ENCODE measurements at regions of chr12 and their contacts with region 1.

Region 1: GRCh38 chr12:49088190-49088931 is 6.2 kb downstream of the DHH start:
- DNase-seq: peak; percentile 88
- H3K4me3 ChIP-seq: 0 out of 2 replicates have a peak overlapping the region, but pooled peaks have one; percentile 29
- H3K27ac ChIP-seq: no peak overlapping the region
- H3K27me3 ChIP-seq: peaks cover 15% of the 10 kb centered on the region
- CTCF ChIP-seq: peak; percentile 89

Region 2: DNA sequence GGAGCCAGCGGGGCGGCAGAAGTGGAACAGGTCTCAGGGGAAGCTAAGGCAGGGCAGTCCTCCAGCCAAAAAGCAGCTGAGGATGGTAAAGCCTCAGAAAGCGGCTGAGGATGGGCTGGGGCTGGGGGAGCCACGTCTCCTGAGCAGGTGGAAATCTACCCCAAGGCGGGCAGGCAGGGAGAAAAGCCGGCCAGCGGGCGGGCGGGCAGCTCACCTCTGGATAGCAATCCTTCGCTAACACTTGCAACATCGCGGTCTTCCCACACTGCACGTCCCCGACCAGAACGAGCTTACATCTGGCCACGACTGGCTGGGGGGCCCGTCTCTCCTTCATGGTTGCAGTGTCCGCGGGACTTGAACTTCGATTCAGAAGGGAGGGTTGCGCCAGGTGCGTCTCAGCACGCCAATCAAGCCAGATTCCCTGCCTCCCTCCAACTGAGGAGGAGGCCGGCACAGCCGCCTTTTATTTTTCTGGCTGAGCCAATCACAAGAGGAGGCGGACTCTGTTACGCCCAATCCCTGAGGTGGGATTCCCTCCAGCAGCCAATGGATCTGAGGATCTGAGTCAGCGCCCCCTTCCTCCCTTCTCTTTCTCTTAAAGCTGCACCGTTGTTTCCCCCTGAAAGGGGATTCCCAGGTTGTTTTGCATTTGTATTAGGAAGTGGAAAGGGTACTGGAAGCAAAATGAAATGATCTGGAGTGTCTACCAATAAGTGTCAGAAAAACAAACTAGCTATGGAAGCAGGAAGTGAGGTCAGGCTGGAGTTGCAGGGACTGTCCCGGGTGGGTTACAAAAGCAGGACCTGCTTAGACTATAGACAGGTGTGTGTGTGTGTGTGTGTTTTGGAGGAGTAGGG is 222.7 kb before region 1 on chr12 and contains the start of gene RND1:
- CTCF ChIA-PET with region 1: no interaction called
- POLR2A ChIA-PET with region 1: no interaction called
- DNase-seq: peak; percentile 70
- H3K4me3 ChIP-seq: peak within 1 kb of the TSS; percentile 66
- H3K27ac ChIP-seq: no peak within 1 kb of the TSS
- H3K27me3 ChIP-seq: peaks cover 36% of the 10 kb centered on the region
- CTCF ChIP-seq: peak; percentile 32
- polyA plus RNA-seq, gene RND1: 0.36 and 0.42 TPM in 2 replicates

Region 3: GRCh38 chr12:48977315-48978281 is 110.8 kb before region 1 on chr12:
- CTCF ChIA-PET with region 1: no interaction called
- POLR2A ChIA-PET with region 1: no interaction called
- DNase-seq: no peak
- H3K4me3 ChIP-seq: no peak overlapping the region
- H3K27ac ChIP-seq: no peak overlapping the region
- H3K27me3 ChIP-seq: peaks cover 64% of the 10 kb centered on the region
- CTCF ChIP-seq: peak; percentile 63

Region 4: DNA sequence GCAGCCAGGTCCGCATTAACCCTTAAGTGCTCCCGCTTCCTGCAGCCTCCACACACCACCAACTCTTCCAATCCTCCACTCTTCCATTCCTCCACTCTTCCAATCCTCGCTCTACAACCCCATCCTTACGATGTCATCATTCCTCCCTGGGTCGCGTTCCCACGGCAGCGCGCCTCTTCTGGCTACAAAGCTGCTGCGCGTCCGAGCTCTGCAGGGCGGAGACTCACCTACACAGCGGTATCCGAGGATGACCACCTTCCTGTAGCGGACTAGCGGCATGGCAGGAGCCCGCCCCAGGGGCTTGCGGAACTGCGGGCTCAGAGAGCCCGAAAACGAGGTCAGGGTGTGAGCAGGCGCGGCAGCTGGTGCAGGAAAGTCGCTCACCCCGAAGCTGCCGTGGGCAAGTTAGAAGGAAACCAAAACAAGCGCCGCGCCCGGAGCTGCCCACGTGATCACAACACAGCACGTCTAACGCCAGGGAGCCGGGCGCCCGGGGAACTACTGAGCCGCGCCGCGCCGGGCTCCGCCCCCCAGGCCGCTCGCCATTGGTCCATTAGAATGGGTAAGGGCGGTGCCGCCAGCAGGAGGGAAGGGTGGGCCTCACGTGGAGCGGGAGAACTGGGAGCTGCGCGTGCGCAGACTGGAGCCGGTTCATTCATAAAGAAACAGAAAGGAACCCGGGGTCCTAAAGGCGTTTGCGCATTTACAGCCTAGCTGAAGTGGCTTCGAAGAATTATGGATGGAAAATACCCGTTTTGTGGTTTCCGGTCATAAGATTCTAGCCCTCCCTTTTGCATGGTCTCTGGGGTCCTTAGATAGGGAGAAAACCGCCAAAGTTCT is 18.6 kb before region 1 on chr12 and contains the start of gene RHEBL1:
- CTCF ChIA-PET with region 1: interaction called, 69 read pairs
- POLR2A ChIA-PET with region 1: interaction called, 6 read pairs
- DNase-seq: peak; percentile 78
- H3K4me3 ChIP-seq: peak within 1 kb of the TSS; percentile 82
- H3K27ac ChIP-seq: peak within 1 kb of the TSS; percentile 70
- H3K27me3 ChIP-seq: no peaks in the 10 kb centered on the region
- CTCF ChIP-seq: peak; percentile 16; the same call in 1 of the 2 replicates
- polyA plus RNA-seq, gene RHEBL1: 0.31 and 0.51 TPM in 2 replicates

Region 5: DNA sequence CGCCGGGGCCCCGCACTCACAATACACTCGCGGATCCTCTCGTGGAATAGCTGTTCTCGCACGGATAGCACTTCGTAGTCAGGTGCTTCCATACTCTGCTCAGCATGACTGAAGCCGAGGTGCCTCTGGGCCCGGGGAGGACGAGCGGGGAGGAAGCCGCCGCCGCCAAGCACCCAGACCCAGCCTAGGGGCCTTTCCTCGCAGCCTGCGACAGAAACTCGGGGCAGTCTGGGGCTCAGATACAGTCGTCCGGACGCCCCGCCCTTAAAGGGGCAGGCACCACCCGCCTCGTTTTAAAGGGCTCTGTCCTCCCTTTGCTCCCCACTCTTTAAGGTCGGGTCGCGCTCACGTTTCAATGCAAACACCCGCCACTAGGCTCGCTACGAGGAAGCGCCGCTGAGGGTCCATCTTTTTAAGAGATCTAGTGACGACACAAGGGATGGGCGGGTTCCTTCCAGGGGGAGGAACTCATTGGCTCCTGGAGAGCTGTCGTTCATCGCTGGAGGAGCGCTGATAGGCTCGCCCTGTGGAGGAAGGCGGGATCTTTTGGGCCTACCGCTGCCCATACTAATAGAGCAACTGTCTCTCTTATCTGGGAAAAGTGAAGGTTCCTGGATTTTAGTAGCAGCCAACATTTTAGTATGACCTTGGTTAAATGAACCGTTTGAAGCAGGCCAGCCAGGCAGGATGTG is 22.2 kb after region 1 on chr12 and contains the start of gene LMBR1L:
- CTCF ChIA-PET with region 1: interaction called, 125 read pairs
- POLR2A ChIA-PET with region 1: interaction called, 6 read pairs
- DNase-seq: peak; percentile 95
- H3K4me3 ChIP-seq: peak within 1 kb of the TSS; percentile 82
- H3K27ac ChIP-seq: peak within 1 kb of the TSS; percentile 87
- H3K27me3 ChIP-seq: no peaks in the 10 kb centered on the region
- CTCF ChIP-seq: peak; percentile 59
- polyA plus RNA-seq, gene LMBR1L: 34.1 and 37.3 TPM in 2 replicates

Region 6: DNA sequence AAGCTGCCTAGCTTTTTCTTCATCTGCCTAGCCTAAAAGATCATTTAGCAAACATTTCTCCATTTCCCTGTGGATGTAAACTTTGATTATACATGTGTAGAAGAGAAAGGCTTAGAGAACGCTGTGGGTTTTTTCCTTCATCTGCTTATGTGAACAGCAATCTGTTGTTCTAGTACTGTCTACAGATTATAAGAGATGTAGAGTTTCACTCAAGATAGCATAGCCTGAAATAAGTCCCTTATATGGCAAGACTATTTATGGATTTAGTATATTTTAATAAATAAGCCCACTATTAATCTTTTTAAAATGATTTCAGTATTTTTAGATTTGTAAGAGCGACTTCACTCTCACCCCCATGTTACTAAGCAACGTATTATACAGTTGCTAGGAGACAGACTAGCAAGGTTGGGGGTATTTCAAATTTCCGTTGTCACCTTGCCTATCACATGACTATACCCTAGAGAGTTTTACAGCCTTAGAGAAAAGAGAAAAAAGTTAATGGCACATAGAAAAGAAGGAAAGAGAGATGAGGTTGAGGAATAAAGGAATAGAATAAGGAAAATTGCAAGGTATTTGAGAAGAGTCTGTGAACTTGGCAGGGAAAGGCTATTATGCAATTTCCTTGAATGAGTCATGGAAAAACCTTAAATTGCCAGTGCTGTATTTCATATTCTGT is 112.7 kb after region 1 on chr12:
- CTCF ChIA-PET with region 1: interaction called, 11 read pairs
- POLR2A ChIA-PET with region 1: no interaction called
- DNase-seq: no peak
- H3K4me3 ChIP-seq: peak overlapping the region; percentile 10
- H3K27ac ChIP-seq: no peak overlapping the region
- H3K27me3 ChIP-seq: no peaks in the 10 kb centered on the region
- CTCF ChIP-seq: no peak

Region 7: GRCh38 chr12:49244176-49244575 is 155.8 kb after region 1 on chr12:
- CTCF ChIA-PET with region 1: interaction called, 20 read pairs
- POLR2A ChIA-PET with region 1: no interaction called
- DNase-seq: no peak
- H3K4me3 ChIP-seq: no peak overlapping the region
- H3K27ac ChIP-seq: peak overlapping the region; percentile 47
- H3K27me3 ChIP-seq: no peaks in the 10 kb centered on the region
- CTCF ChIP-seq: no peak

Measured in AG04450 (cell line).